Activated CD4-positive, alpha-beta T cell treated with anti-CD3 and anti-CD28 coated beads for 36 hours (primary cell): ENCODE measurements at regions of chr1 and their contacts with region 1.

Region 1: DNA sequence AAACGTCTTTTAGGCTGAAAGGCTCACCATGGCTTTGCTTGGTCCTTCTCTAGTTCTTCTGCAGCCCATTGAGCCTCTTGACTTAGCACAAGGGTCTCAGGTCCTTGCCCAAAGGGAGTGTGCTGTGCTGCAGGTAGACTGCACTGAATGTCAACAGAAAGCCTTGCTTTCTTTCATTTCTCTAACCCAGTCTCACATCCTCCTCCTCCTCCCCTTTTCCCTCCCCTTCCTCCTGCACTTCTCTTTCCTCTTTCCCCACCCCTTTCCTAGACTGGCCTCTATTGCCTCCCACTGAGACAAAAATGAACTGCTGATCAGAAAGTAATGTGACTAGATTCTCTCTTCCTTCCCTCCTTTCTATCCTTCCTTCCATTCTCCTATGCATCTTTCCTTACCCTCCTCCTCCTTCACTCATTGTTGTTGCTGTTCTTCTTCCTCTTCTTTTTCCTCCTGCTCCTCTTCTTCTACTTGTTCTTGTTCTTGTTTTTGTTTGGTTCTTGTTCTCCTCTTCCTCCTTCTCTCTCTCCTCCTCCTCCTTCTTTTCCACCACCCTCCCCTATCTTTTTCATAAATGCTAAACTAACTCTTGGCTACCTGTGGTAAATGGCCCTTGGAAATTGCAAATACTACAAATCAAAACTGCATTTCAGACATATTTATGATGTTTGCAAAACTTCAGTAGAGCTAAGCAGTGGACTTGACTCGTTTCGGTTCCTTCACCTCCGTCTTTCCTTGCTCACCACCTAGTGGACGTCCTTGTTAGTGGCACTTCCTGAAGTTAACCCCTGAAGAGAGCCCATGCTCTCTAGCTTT is at the start of gene SELL:
- DNase-seq: peak; percentile 86
- ATAC-seq: peak; percentile 77
- H3K4me3 Mint-ChIP-seq: peak within 1 kb of the TSS; percentile 83
- H3K27ac Mint-ChIP-seq: peak within 1 kb of the TSS; percentile 93
- H3K4me1 Mint-ChIP-seq: peaks cover 23% of the 10 kb centered on the region
- H3K27me3 Mint-ChIP-seq: peaks cover 4% of the 10 kb centered on the region
- total RNA-seq, gene SELL: 206 to 262 TPM

Region 2: GRCh38 chr1:169466259-169467230 is 245.1 kb before region 1 on chr1:
- CTCF ChIA-PET with region 1: interaction called, 3 read pairs
- POLR2A ChIA-PET with region 1: no interaction called
- intact Hi-C with region 1: loop called in 1 of 2 experiments (anchors 5 kb)
- DNase-seq: peak; percentile 46
- ATAC-seq: no peak
- H3K4me3 Mint-ChIP-seq: no peak overlapping the region
- H3K27ac Mint-ChIP-seq: no peak overlapping the region
- H3K4me1 Mint-ChIP-seq: peaks cover 4% of the 10 kb centered on the region
- H3K27me3 Mint-ChIP-seq: no peaks in the 10 kb centered on the region

Region 3: GRCh38 chr1:169572187-169572586 is 139.5 kb before region 1 on chr1:
- CTCF ChIA-PET with region 1: interaction called, 10 read pairs
- POLR2A ChIA-PET with region 1: no interaction called
- intact Hi-C with region 1: no loop called
- DNase-seq: no peak
- ATAC-seq: no peak
- H3K4me3 Mint-ChIP-seq: no peak overlapping the region
- H3K27ac Mint-ChIP-seq: peak overlapping the region; percentile 61
- H3K4me1 Mint-ChIP-seq: peaks cover 24% of the 10 kb centered on the region
- H3K27me3 Mint-ChIP-seq: no peaks in the 10 kb centered on the region

Region 4: DNA sequence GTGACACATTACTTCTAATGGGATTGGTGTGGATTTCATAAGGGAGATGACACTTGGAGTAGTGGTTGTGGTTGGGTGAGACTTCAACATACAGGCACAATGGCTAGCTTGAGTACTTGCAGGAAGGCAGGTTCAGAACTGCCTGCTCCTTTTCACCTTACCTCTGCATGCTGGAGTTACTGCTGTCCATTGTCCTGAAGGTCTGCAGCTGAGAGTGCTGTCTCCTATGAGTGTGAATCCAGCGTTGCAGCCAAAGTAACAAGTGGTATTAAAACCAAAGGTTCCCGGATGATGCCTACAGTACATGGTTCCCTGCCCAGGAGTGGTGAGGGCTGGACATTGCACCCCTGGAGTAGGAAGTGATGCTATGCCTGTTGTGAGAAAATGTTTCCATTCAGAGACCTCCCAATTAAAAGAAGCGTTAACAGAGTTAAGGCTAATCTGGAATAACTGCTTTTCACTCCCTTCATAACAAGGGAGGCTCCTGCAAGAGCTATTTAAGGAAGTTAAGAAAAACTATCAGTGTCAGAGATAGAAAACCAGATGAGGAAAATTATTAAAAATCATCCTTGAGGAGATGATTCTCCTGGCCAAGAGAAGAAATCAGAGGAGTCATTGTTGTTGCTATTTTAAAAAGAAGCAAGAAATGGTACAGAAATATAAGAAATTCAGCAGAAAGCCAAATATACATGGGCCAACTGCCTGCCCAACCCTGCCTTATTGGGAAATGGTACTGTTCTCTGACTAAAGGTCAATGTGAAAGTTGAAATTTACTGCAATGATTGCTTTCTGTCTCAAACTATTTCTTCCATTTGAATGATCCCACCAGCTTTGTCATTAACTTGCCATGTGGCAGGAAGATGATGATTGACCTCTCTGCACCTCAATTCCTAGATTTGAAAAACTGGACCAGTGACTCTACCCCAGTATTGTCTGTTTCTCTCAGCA is 115.6 kb before region 1 on chr1:
- CTCF ChIA-PET with region 1: interaction called, 119 read pairs
- POLR2A ChIA-PET with region 1: no interaction called
- intact Hi-C with region 1: loop called (anchors 1 kb)
- DNase-seq: peak; percentile 57
- ATAC-seq: peak; percentile 54
- H3K4me3 Mint-ChIP-seq: no peak overlapping the region
- H3K27ac Mint-ChIP-seq: no peak overlapping the region
- H3K4me1 Mint-ChIP-seq: peaks cover 62% of the 10 kb centered on the region
- H3K27me3 Mint-ChIP-seq: no peaks in the 10 kb centered on the region

Region 5: GRCh38 chr1:169694304-169695075 is 17.2 kb before region 1 on chr1:
- CTCF ChIA-PET with region 1: interaction called, 31 read pairs
- POLR2A ChIA-PET with region 1: interaction called, 6 read pairs
- intact Hi-C with region 1: loop called (anchors 1 kb)
- DNase-seq: peak; percentile 52
- ATAC-seq: peak; percentile 26
- H3K4me3 Mint-ChIP-seq: peak overlapping the region; percentile 39
- H3K27ac Mint-ChIP-seq: peak overlapping the region; percentile 95
- H3K4me1 Mint-ChIP-seq: peaks cover 97% of the 10 kb centered on the region
- H3K27me3 Mint-ChIP-seq: no peaks in the 10 kb centered on the region

Region 6: GRCh38 chr1:169874229-169874628 is 162.6 kb after region 1 on chr1:
- CTCF ChIA-PET with region 1: no interaction called
- POLR2A ChIA-PET with region 1: no interaction called
- intact Hi-C with region 1: no loop called
- DNase-seq: no peak
- ATAC-seq: no peak
- H3K4me3 Mint-ChIP-seq: no peak overlapping the region
- H3K27ac Mint-ChIP-seq: no peak overlapping the region
- H3K4me1 Mint-ChIP-seq: peaks cover 16% of the 10 kb centered on the region
- H3K27me3 Mint-ChIP-seq: no peaks in the 10 kb centered on the region

Region 7: GRCh38 chr1:170531758-170532657 is 820.3 kb after region 1 on chr1 and contains the start of gene GORAB:
- CTCF ChIA-PET with region 1: no interaction called
- POLR2A ChIA-PET with region 1: no interaction called
- intact Hi-C with region 1: loop called in 1 of 2 experiments (anchors 10 kb)
- DNase-seq: peak; percentile 94
- ATAC-seq: peak; percentile 98
- H3K4me3 Mint-ChIP-seq: no peak within 1 kb of the TSS
- H3K27ac Mint-ChIP-seq: no peak within 1 kb of the TSS
- H3K4me1 Mint-ChIP-seq: peaks cover 15% of the 10 kb centered on the region
- H3K27me3 Mint-ChIP-seq: no peaks in the 10 kb centered on the region
- total RNA-seq, gene GORAB: 9.8 to 13.5 TPM